OCI-LY7 (cell line): ENCODE measurements at regions of chr16 and their contacts with region 1.

Region 1: GRCh38 chr16:59168461-59169114 is 434.5 kb upstream of the GOT2 start:
- DNase-seq: no peak
- H3K4me3 ChIP-seq: no peak overlapping the region
- H3K27ac ChIP-seq: no peak overlapping the region
- H3K4me1 ChIP-seq: no peaks in the 10 kb centered on the region
- CTCF ChIP-seq: no peak

Region 2: GRCh38 chr16:59090541-59090940 is 78.0 kb before region 1 on chr16:
- CTCF ChIA-PET with region 1: no interaction called
- POLR2A ChIA-PET with region 1: no interaction called
- intact Hi-C with region 1: loop called (anchors 2 kb)
- DNase-seq: no peak
- H3K4me3 ChIP-seq: no peak overlapping the region
- H3K27ac ChIP-seq: no peak overlapping the region
- H3K4me1 ChIP-seq: no peaks in the 10 kb centered on the region
- CTCF ChIP-seq: no peak